Caco-2 (cell line): ENCODE measurements at regions of chr11 and their contacts with region 1.

Region 1: GRCh38 chr11:118610804-118611795 is 3.7 kb downstream of the PHLDB1 start:
- DNase-seq: peak; percentile 36 to 53
- H3K4me3 ChIP-seq: no peak overlapping the region
- H3K4me3 Mint-ChIP-seq: no peak overlapping the region
- H3K27ac Mint-ChIP-seq: no peak overlapping the region
- H3K4me1 ChIP-seq: peaks cover 39% of the 10 kb centered on the region
- H3K4me1 Mint-ChIP-seq: peaks cover 31% of the 10 kb centered on the region
- H3K27me3 ChIP-seq: no peaks in the 10 kb centered on the region
- H3K27me3 Mint-ChIP-seq: no peaks in the 10 kb centered on the region
- CTCF ChIP-seq: peak; percentile 36 to 65

Region 2: GRCh38 chr11:118304568-118305248 is 306.4 kb before region 1 on chr11 and contains the start of gene CD3E:
- CTCF ChIA-PET with region 1: no interaction called
- POLR2A ChIA-PET with region 1: no interaction called
- intact Hi-C with region 1: no loop called
- DNase-seq: no peak
- H3K4me3 ChIP-seq: no peak within 1 kb of the TSS
- H3K4me3 Mint-ChIP-seq: no peak within 1 kb of the TSS
- H3K27ac Mint-ChIP-seq: no peak within 1 kb of the TSS
- H3K4me1 ChIP-seq: no peaks in the 10 kb centered on the region
- H3K4me1 Mint-ChIP-seq: no peaks in the 10 kb centered on the region
- H3K27me3 ChIP-seq: no peaks in the 10 kb centered on the region
- H3K27me3 Mint-ChIP-seq: no peaks in the 10 kb centered on the region
- CTCF ChIP-seq: no peak
- total RNA-seq, gene CD3E: 0.39 TPM in 1 of 2 replicates, not detected in the other

Region 3: DNA sequence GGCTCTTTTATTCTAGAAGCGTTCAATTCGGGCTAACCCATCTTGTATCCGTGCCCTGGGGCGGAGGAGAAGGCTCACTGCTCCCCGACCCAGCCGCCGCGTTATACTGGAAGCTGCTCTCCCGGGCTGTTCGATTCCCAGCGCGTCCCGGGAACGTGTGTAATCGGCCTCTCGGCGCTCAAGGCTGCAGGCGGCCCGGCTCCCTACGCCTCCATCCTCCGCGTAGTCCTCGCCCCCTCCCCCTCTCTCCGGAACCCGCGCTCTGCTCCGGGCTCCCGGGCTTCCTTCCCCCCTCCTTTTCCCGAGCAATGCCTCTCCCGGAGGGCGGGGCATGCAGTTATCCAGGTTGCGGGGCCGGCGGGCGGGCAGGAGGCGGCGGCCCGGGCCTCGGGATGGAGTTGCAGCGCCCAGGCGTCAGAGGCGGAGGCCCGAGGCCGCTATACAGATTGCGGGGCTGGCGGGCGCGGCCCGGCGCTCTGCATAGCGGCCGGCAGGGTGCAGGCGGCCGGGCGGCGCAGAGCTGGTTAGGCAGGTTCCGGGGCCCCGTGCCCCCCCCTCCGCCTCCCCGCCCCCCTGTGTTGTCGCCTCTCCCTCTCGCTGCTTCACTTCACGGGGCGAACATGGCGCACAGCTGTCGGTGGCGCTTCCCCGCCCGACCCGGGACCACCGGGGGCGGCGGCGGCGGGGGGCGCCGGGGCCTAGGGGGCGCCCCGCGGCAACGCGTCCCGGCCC is 175.0 kb before region 1 on chr11 and contains the start of gene KMT2A:
- CTCF ChIA-PET with region 1: no interaction called
- POLR2A ChIA-PET with region 1: interaction called, 10 read pairs
- intact Hi-C with region 1: no loop called
- DNase-seq: peak; percentile 100
- H3K4me3 ChIP-seq: peak within 1 kb of the TSS; percentile 97
- H3K4me3 Mint-ChIP-seq: peak within 1 kb of the TSS; percentile 82
- H3K27ac Mint-ChIP-seq: peak within 1 kb of the TSS; percentile 88
- H3K4me1 ChIP-seq: peaks cover 24% of the 10 kb centered on the region
- H3K4me1 Mint-ChIP-seq: peaks cover 27% of the 10 kb centered on the region
- H3K27me3 ChIP-seq: no peaks in the 10 kb centered on the region
- H3K27me3 Mint-ChIP-seq: no peaks in the 10 kb centered on the region
- CTCF ChIP-seq: peak in 1 of 2 experiments; percentile 15
- total RNA-seq, gene KMT2A: 93.9 and 107 TPM in 2 replicates

Region 4: DNA sequence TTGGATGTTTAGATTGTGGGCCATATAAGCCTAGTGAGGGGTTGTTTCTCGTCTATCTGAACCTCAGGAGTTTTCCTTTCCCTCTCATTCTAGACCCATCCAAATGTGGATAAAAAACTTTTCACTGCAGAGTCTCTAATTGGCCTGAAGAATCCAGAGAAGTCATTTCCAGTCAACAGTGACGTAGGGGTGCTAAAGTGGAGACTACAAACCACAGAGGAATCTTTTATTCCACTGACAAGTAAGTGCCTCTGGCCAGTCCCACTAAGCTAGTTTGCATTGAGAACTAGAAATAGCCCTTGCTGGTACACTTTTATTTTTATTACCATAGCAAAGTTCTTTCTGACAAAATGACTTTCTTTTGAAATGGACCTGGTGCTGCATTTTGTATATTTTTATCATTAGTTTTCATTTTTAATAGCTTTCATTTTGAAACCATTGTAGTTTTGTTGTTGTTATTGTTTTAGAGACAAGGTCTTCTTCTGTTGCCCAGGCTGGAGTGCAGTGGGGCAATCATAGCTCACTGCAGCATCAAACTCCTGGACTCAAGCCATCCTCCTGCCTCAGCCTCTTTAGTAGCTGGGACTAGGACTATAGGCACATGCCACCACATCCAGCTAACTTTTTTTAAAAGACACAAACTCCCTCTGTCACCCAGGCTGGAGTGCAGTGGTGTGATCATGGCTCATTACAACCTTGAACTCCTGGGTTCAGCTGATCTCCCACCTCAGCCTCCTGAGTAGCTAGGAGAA is 18.3 kb before region 1 on chr11:
- CTCF ChIA-PET with region 1: interaction called, 38 read pairs
- POLR2A ChIA-PET with region 1: no interaction called
- intact Hi-C with region 1: no loop called
- DNase-seq: no peak
- H3K4me3 ChIP-seq: no peak overlapping the region
- H3K4me3 Mint-ChIP-seq: no peak overlapping the region
- H3K27ac Mint-ChIP-seq: no peak overlapping the region
- H3K4me1 ChIP-seq: no peaks in the 10 kb centered on the region
- H3K4me1 Mint-ChIP-seq: peaks cover 4% of the 10 kb centered on the region
- H3K27me3 ChIP-seq: no peaks in the 10 kb centered on the region
- H3K27me3 Mint-ChIP-seq: no peaks in the 10 kb centered on the region
- CTCF ChIP-seq: no peak

Region 5: GRCh38 chr11:118621071-118621783 is 10.1 kb after region 1 on chr11:
- CTCF ChIA-PET with region 1: interaction called, 29 read pairs
- POLR2A ChIA-PET with region 1: interaction called, 13 read pairs
- intact Hi-C with region 1: loop called (anchors 1 kb)
- DNase-seq: peak; percentile 96 to 97
- H3K4me3 ChIP-seq: peak overlapping the region; percentile 63
- H3K4me3 Mint-ChIP-seq: peak overlapping the region; percentile 87
- H3K27ac Mint-ChIP-seq: peak overlapping the region; percentile 93
- H3K4me1 ChIP-seq: peaks cover 49% of the 10 kb centered on the region
- H3K4me1 Mint-ChIP-seq: peaks cover 37% of the 10 kb centered on the region
- H3K27me3 ChIP-seq: no peaks in the 10 kb centered on the region
- H3K27me3 Mint-ChIP-seq: no peaks in the 10 kb centered on the region
- CTCF ChIP-seq: no peak

Region 6: DNA sequence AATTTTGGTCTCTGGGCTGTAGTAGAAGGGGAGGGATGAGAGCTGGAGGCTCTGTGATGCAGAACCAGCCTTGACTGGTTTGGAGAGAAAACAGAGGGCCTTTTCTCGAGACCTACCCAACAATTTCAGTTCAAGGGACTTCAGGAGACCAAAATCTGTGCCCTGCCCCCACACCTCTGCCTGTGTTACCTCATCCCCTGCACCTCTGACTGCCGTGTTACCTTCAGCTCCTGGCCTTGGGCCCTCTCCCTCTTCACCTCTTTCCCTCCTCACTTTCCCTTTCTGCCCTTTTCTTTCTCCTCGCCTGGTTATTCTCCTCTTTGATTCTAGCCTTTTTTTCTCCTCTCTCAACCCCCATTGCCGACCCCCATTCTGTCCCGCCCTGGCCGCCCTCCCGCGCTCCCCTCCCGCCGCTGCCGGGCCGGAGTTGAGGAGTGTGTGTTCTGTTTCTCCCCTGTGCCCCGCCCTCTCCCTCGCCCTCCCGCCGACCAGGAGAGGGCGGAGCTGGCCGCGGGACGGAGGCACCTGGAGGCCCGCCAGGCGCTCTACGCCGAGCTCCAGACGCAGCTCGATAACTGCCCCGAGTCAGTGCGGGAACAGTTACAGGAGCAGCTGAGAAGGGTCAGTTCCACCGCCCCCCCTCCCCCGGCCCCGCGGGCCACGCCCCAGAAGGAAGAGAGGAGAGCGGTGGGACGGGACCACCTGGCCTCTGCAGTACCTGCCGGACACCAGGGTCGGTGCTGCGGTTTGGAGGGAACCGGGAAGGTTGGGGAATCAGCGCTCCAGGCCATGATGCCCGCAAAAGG is 23.5 kb after region 1 on chr11:
- CTCF ChIA-PET with region 1: interaction called, 10 read pairs
- POLR2A ChIA-PET with region 1: no interaction called
- intact Hi-C with region 1: no loop called
- DNase-seq: peak in 1 of 2 experiments; percentile 70
- H3K4me3 ChIP-seq: peak overlapping the region; percentile 17
- H3K4me3 Mint-ChIP-seq: peak overlapping the region; percentile 54
- H3K27ac Mint-ChIP-seq: no peak overlapping the region
- H3K4me1 ChIP-seq: 0 out of 2 replicates have a peak, but pooled peaks cover 3% of the 10 kb centered on the region
- H3K4me1 Mint-ChIP-seq: peaks cover 7% of the 10 kb centered on the region
- H3K27me3 ChIP-seq: no peaks in the 10 kb centered on the region
- H3K27me3 Mint-ChIP-seq: no peaks in the 10 kb centered on the region
- CTCF ChIP-seq: peak in 1 of 2 experiments; percentile 52

Region 7: GRCh38 chr11:118640332-118641154 is 29.4 kb after region 1 on chr11:
- CTCF ChIA-PET with region 1: interaction called, 10 read pairs
- POLR2A ChIA-PET with region 1: interaction called, 10 read pairs
- intact Hi-C with region 1: loop called (anchors 1 kb)
- DNase-seq: peak in 1 of 2 experiments; percentile 47
- H3K4me3 ChIP-seq: no peak overlapping the region
- H3K4me3 Mint-ChIP-seq: no peak overlapping the region
- H3K27ac Mint-ChIP-seq: no peak overlapping the region
- H3K4me1 ChIP-seq: no peaks in the 10 kb centered on the region
- H3K4me1 Mint-ChIP-seq: no peaks in the 10 kb centered on the region
- H3K27me3 ChIP-seq: no peaks in the 10 kb centered on the region
- H3K27me3 Mint-ChIP-seq: no peaks in the 10 kb centered on the region
- CTCF ChIP-seq: peak; percentile 29 to 62

Region 8: GRCh38 chr11:118659314-118659952 is 48.3 kb after region 1 on chr11:
- CTCF ChIA-PET with region 1: interaction called, 19 read pairs
- POLR2A ChIA-PET with region 1: no interaction called
- intact Hi-C with region 1: loop called (anchors 1 kb)
- DNase-seq: peak; percentile 97 to 99
- H3K4me3 ChIP-seq: no peak overlapping the region
- H3K4me3 Mint-ChIP-seq: no peak overlapping the region
- H3K27ac Mint-ChIP-seq: peak overlapping the region; percentile 43
- H3K4me1 ChIP-seq: peaks cover 37% of the 10 kb centered on the region
- H3K4me1 Mint-ChIP-seq: peaks cover 11% of the 10 kb centered on the region
- H3K27me3 ChIP-seq: no peaks in the 10 kb centered on the region
- H3K27me3 Mint-ChIP-seq: no peaks in the 10 kb centered on the region
- CTCF ChIP-seq: peak; percentile 100